SK-N-SH (cell line): ENCODE measurements at regions of chr15 and their contacts with region 1.

Region 1: DNA sequence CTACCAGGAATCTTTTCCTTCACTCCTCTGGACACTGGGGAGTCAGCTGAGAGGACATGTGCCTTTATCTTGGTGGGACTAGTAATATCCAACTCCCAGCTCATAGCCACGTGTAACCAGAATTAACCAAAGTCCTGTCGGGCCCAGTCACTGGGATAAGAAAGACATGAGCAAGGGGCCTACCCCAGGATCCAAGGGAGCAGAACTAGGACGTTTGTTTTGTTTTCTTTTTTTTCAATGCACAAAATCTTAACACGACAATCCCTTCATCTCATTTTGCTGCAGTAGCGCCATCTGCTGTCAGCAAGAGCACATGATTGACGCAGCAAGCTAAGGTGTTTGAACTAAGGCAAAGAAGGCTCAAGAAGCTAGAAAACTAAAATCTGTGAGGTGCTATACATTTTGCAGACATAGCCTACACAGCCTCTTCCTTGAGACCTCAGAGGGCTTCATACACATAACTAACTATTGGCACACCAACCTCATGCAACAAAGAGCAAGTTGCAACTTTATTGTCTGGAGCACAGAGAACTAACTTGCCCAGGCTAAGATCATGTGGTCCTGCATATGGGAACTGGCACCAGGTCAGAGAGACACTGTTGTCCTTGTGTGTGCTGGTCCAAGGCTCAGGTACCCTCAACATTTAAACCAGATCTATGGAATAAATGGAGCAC is 43.6 kb downstream of the RLBP1 start:
- DNase-seq: peak; percentile 55
- H3K4me3 ChIP-seq: peak overlapping the region in 1 of 2 experiments; percentile 9; a peak in 1 of 4 replicates
- H3K27ac ChIP-seq: no peak overlapping the region
- H3K4me1 ChIP-seq: peaks cover 0 to 2% of the 10 kb centered on the region in 2 experiments; a peak in 1 of 4 replicates
- H3K27me3 ChIP-seq: no peaks in the 10 kb centered on the region
- CTCF ChIP-seq: peak; percentile 94
- EP300 ChIP-seq: no peak
- RAD21 ChIP-seq: peak; percentile 85

Region 2: DNA sequence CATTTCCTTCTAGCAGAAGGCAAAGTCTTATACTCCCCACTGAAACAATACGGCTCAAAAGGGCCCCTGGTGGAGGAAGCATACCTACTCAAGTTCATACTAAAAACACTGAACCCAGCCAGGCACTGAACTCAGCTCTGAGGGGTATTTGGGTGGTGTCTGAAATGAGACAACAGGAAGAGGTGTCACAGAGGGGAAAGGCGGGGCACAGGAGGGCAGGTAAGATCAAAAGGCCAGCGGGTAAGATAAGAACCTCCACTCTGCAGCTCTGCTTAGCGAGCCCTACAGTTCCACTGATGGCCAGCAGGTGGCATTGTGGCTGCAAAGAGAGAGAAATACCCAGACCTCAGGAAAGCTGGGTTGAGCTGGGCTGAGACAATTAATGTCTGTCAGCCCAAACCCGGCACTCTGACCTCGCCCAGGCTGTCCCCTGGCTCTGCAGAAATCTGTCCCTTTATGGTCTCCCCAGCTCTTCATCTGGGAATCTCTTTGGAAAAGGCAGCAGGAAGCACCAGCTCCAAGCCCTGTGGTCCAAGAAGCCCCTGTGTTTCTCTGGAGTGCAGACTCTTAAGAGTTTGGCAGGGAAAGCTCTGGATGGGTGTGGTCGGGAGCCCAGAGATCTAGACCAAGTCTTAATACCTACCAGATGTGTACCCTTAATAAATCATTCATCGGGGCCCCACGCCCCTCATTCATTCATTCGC is 273.0 kb before region 1 on chr15:
- CTCF ChIA-PET with region 1: interaction called, 15 read pairs
- POLR2A ChIA-PET with region 1: no interaction called
- DNase-seq: peak; percentile 84
- H3K4me3 ChIP-seq: no peak overlapping the region; a peak in 1 of 4 replicates
- H3K27ac ChIP-seq: no peak overlapping the region
- H3K4me1 ChIP-seq: no peaks in the 10 kb centered on the region; a peak in 1 of 4 replicates
- H3K27me3 ChIP-seq: no peaks in the 10 kb centered on the region
- CTCF ChIP-seq: peak; percentile 98
- EP300 ChIP-seq: no peak
- RAD21 ChIP-seq: peak; percentile 88

Region 3: GRCh38 chr15:89068325-89068784 is 109.4 kb before region 1 on chr15:
- CTCF ChIA-PET with region 1: interaction called, 363 read pairs
- POLR2A ChIA-PET with region 1: no interaction called
- DNase-seq: no peak
- H3K4me3 ChIP-seq: no peak overlapping the region
- H3K27ac ChIP-seq: no peak overlapping the region
- H3K4me1 ChIP-seq: no peaks in the 10 kb centered on the region
- H3K27me3 ChIP-seq: no peaks in the 10 kb centered on the region
- CTCF ChIP-seq: no peak
- EP300 ChIP-seq: no peak
- RAD21 ChIP-seq: no peak

Region 4: DNA sequence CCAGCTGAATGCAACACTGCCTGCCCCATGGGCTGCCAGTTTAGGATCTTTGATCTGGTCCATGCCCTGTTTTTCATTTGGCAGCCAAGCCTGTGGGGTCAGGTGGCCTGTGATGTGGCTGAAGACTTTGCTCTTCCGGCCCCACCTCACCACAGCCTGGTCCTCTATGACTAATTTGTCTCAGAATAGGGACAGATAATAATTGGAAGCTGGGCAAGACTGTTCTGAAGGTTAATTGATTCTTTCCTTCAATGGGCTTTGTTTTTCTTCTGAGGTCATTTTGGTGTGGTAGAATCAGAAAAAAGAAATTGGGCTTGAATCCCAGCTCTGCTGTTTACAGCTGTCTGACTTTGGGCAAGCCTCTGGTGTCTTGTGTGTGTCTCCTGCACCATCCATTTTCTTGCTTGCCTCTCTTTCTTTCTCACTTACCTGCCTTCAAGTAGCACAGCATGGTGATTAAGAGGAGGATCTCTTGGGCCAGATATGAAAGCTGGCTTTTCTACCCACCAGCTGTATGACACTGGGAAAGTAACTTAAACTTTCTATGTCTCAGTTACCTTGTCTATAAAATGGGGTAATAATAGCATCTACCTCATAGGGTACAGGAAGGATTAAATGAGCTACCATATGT is 65.3 kb before region 1 on chr15:
- CTCF ChIA-PET with region 1: interaction called, 10 read pairs
- POLR2A ChIA-PET with region 1: no interaction called
- DNase-seq: no peak
- H3K4me3 ChIP-seq: no peak overlapping the region
- H3K27ac ChIP-seq: peak overlapping the region; percentile 51 to 68
- H3K4me1 ChIP-seq: peaks cover 14 to 54% of the 10 kb centered on the region in 2 experiments
- H3K27me3 ChIP-seq: no peaks in the 10 kb centered on the region
- CTCF ChIP-seq: no peak
- EP300 ChIP-seq: no peak; a peak in 1 of 4 replicates
- RAD21 ChIP-seq: no peak

Region 5: DNA sequence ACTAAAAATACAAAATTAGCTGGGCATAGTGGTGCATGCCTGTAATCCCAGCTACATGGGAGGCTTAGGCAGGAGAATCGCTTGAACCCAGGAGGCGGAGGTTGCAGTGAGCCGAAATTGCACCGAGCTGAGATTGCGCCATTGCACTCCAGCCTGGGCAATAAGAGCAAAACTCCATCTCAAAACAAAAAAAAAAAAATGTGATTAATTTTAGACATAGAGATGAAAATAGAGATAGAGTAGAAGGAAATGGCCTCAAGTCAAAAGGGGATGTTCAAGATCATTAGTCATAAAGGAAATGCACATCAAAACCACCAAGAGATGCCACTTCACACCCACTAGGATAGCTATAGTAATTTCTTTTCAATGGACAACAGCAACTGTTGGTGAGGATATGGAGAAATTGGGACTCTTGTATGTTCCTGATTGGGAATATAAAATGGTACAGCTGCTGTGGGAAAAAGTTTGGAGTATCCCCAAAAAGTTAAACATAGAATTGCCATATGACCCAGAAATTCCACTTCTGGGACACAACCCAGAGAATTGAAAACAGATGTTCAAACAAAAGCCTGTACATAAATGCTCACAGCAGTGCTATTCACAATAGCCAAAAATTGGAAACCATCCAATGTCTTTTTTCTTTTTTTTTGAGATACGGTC is 34.1 kb before region 1 on chr15:
- CTCF ChIA-PET with region 1: interaction called, 31 read pairs
- POLR2A ChIA-PET with region 1: no interaction called
- DNase-seq: peak; percentile 36
- H3K4me3 ChIP-seq: peak overlapping the region in 1 of 2 experiments; percentile 18; a peak in 1 of 4 replicates
- H3K27ac ChIP-seq: peak overlapping the region; percentile 77 to 96; a peak in 3 of 4 replicates
- H3K4me1 ChIP-seq: peaks cover 19 to 46% of the 10 kb centered on the region in 2 experiments
- H3K27me3 ChIP-seq: no peaks in the 10 kb centered on the region
- CTCF ChIP-seq: no peak
- EP300 ChIP-seq: peak; percentile 26 to 54
- RAD21 ChIP-seq: no peak

Region 6: DNA sequence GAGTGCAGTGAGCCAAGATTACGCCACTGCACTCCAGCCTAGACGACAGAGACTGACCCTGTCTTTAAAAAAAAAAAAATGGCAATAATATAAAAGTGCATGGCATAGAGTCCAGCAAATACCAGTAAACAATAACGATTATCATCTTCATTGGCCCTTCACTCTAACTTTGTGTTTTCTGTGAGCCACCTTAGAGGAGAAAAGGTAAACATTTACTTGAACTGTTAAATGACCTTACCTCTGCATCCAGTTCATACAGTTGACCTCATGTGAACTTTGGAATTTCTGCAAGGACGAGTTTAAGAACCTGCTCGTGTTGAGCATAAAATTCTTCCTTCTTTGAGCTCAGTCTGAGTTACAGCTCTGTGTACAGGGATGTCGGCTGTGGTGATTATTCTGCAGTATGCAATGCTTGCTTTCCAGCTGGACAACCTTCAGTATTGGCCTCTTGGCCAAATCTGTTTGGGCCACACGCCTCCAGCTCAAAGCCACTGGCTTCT is 13.0 kb before region 1 on chr15:
- CTCF ChIA-PET with region 1: interaction called, 30 read pairs
- POLR2A ChIA-PET with region 1: no interaction called
- DNase-seq: no peak
- H3K4me3 ChIP-seq: no peak overlapping the region
- H3K27ac ChIP-seq: no peak overlapping the region
- H3K4me1 ChIP-seq: peaks cover 28 to 30% of the 10 kb centered on the region in 2 experiments
- H3K27me3 ChIP-seq: no peaks in the 10 kb centered on the region
- CTCF ChIP-seq: no peak
- EP300 ChIP-seq: no peak
- RAD21 ChIP-seq: no peak

Region 7: GRCh38 chr15:89197503-89197971 is 19.8 kb after region 1 on chr15:
- CTCF ChIA-PET with region 1: interaction called, 60 read pairs
- POLR2A ChIA-PET with region 1: no interaction called
- DNase-seq: no peak
- H3K4me3 ChIP-seq: no peak overlapping the region
- H3K27ac ChIP-seq: no peak overlapping the region
- H3K4me1 ChIP-seq: peaks cover 1 to 4% of the 10 kb centered on the region in 2 experiments; a peak in 1 of 4 replicates
- H3K27me3 ChIP-seq: no peaks in the 10 kb centered on the region
- CTCF ChIP-seq: no peak
- EP300 ChIP-seq: no peak
- RAD21 ChIP-seq: no peak